SK-N-SH (cell line): ENCODE measurements at regions of chr1 and their contacts with region 1.

Region 1: GRCh38 chr1:18100491-18101063 is 7.0 kb upstream of the IGSF21 start:
- DNase-seq: peak; percentile 70
- H3K4me3 ChIP-seq: no peak overlapping the region; a peak in 1 of 4 replicates
- H3K27ac ChIP-seq: no peak overlapping the region
- H3K4me1 ChIP-seq: no peaks in the 10 kb centered on the region; a peak in 1 of 4 replicates
- H3K27me3 ChIP-seq: no peaks in the 10 kb centered on the region
- CTCF ChIP-seq: peak; percentile 84
- EP300 ChIP-seq: no peak
- RAD21 ChIP-seq: peak; percentile 80

Region 2: DNA sequence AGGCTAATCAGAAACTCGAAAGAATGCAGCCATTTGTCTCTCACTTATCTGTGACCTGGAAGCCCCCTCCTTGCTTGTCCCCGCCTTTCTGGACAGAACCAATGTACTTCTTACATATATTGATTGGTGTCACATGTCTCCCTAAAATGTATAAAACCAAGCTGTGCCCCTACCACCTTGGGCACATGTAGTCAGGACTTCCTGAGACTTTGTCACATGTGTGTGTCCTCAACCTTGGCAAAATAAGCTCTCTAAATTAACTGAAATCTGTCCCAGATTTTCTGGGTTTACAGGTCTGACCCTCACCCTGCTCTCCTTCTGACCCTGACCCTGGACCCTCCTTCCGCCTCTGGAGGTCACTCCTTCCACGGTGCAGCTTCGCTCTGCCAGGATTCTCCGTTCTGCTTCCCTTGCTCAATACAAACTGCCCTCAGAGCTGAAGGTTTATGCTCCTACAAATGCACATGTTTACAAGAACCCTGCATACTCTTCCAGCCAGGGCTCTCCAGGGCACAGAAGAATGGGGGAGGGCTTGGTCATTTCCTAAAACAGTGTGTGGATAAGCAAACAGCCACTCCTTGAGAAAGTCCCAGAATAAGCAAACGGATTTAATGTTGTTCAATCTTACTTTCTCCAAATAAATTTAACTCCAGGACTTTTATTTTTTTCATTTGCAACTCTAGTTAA is 184.9 kb before region 1 on chr1:
- CTCF ChIA-PET with region 1: interaction called, 33 read pairs
- POLR2A ChIA-PET with region 1: no interaction called
- DNase-seq: no peak
- H3K4me3 ChIP-seq: no peak overlapping the region
- H3K27ac ChIP-seq: no peak overlapping the region
- H3K4me1 ChIP-seq: no peaks in the 10 kb centered on the region; a peak in 1 of 4 replicates
- H3K27me3 ChIP-seq: no peaks in the 10 kb centered on the region
- CTCF ChIP-seq: no peak
- EP300 ChIP-seq: no peak
- RAD21 ChIP-seq: no peak

Region 3: GRCh38 chr1:17933971-17934370 is 166.6 kb before region 1 on chr1:
- CTCF ChIA-PET with region 1: interaction called, 131 read pairs
- POLR2A ChIA-PET with region 1: no interaction called
- DNase-seq: peak; percentile 83
- H3K4me3 ChIP-seq: no peak overlapping the region
- H3K27ac ChIP-seq: peak overlapping the region in 1 of 2 experiments; percentile 87; a peak in 2 of 4 replicates
- H3K4me1 ChIP-seq: peaks cover 0 to 35% of the 10 kb centered on the region in 2 experiments; a peak in 2 of 4 replicates
- H3K27me3 ChIP-seq: no peaks in the 10 kb centered on the region
- CTCF ChIP-seq: no peak
- EP300 ChIP-seq: peak in 1 of 2 experiments; percentile 88; a peak in 2 of 4 replicates
- RAD21 ChIP-seq: peak; percentile 13; the same call in 1 of the 2 replicates

Region 4: GRCh38 chr1:17984583-17984982 is 116.0 kb before region 1 on chr1:
- CTCF ChIA-PET with region 1: interaction called, 13 read pairs
- POLR2A ChIA-PET with region 1: no interaction called
- DNase-seq: peak; percentile 49
- H3K4me3 ChIP-seq: no peak overlapping the region; a peak in 1 of 4 replicates
- H3K27ac ChIP-seq: no peak overlapping the region
- H3K4me1 ChIP-seq: no peaks in the 10 kb centered on the region; a peak in 1 of 4 replicates
- H3K27me3 ChIP-seq: no peaks in the 10 kb centered on the region
- CTCF ChIP-seq: peak; percentile 61
- EP300 ChIP-seq: no peak
- RAD21 ChIP-seq: peak; percentile 65

Region 5: DNA sequence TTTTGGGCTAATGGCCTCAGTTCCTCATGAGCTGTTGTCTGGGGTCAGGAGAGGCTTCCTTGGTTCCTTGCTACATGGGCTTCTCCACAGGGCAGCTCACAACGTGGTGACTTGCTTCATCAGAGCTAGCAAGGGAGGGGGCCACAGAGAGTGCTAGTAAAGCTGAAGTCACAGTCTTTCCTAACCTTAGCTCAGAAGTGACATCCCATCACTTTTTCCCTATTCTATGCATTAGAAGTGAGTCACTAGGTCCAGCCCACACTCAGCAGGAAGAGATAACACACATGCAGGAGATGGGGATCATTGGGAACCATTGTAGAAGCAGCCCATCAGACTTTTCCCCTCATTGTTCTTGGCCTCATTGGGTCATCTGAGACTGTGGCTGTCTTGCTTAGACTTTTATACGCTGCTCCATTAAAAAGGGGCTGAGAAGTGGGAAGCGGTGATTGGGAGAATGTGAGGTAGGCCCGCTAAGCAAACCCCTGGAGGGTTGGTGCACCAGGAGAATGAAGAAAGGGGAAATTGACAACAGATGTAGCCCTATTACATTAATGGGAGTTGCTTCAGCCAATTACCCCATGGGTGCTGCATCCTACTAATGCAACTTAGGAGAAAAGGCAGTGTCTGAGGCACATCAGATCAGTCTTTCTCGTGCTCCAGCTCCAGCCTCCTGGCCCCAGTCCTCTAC is 15.0 kb before region 1 on chr1:
- CTCF ChIA-PET with region 1: interaction called, 28 read pairs
- POLR2A ChIA-PET with region 1: no interaction called
- DNase-seq: peak; percentile 23
- H3K4me3 ChIP-seq: no peak overlapping the region
- H3K27ac ChIP-seq: no peak overlapping the region
- H3K4me1 ChIP-seq: peaks cover 0 to 9% of the 10 kb centered on the region in 2 experiments; a peak in 1 of 4 replicates
- H3K27me3 ChIP-seq: no peaks in the 10 kb centered on the region
- CTCF ChIP-seq: no peak
- EP300 ChIP-seq: no peak
- RAD21 ChIP-seq: no peak

Region 6: DNA sequence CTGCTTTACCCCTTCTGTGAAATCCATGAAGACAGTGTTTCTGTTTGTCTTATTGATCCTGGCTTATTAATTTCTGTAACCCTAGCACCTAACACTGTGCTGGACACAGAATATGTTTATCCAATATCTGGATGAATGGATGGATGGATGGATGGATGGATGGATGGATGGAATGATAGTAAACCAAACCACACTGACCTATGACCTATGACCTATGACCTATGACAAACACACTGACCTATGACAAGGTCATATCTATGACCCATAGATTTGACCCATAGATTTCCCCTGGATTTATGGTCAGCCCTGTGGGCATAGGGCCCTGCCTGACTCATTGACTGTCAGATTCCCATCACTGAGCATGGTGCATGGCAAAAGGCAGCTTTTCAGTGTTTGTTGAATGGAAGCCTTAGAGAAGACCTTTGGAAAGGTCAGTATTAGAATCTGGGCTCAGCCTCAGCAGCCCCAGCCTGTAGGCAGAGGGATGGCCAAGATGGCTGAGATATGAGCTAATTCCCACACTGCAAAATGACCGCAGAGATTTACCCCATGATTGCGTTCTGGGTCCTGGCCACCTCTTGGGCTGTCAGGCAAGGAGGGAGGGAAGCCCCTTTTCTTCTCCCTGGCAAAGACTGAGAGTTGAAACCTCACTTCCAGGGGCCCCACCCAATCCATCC is 31.6 kb after region 1 on chr1:
- CTCF ChIA-PET with region 1: no interaction called
- POLR2A ChIA-PET with region 1: no interaction called
- DNase-seq: no peak
- H3K4me3 ChIP-seq: no peak overlapping the region
- H3K27ac ChIP-seq: peak overlapping the region in 1 of 2 experiments; percentile 60; a peak in 1 of 4 replicates
- H3K4me1 ChIP-seq: peaks cover 0 to 38% of the 10 kb centered on the region in 2 experiments; a peak in 2 of 4 replicates
- H3K27me3 ChIP-seq: no peaks in the 10 kb centered on the region
- CTCF ChIP-seq: no peak
- EP300 ChIP-seq: no peak
- RAD21 ChIP-seq: no peak

Region 7: GRCh38 chr1:18288722-18289121 is 188.1 kb after region 1 on chr1:
- CTCF ChIA-PET with region 1: no interaction called
- POLR2A ChIA-PET with region 1: no interaction called
- DNase-seq: peak; percentile 77
- H3K4me3 ChIP-seq: no peak overlapping the region
- H3K27ac ChIP-seq: peak overlapping the region in 1 of 2 experiments; percentile 73; a peak in 2 of 4 replicates
- H3K4me1 ChIP-seq: peaks cover 0 to 25% of the 10 kb centered on the region in 2 experiments; a peak in 2 of 4 replicates
- H3K27me3 ChIP-seq: no peaks in the 10 kb centered on the region
- CTCF ChIP-seq: no peak
- EP300 ChIP-seq: no peak; a peak in 1 of 4 replicates
- RAD21 ChIP-seq: no peak; the same call in 1 of the 2 replicates